GM23248 (cell line): ENCODE measurements at regions of chr11 and their contacts with region 1.

Region 1: DNA sequence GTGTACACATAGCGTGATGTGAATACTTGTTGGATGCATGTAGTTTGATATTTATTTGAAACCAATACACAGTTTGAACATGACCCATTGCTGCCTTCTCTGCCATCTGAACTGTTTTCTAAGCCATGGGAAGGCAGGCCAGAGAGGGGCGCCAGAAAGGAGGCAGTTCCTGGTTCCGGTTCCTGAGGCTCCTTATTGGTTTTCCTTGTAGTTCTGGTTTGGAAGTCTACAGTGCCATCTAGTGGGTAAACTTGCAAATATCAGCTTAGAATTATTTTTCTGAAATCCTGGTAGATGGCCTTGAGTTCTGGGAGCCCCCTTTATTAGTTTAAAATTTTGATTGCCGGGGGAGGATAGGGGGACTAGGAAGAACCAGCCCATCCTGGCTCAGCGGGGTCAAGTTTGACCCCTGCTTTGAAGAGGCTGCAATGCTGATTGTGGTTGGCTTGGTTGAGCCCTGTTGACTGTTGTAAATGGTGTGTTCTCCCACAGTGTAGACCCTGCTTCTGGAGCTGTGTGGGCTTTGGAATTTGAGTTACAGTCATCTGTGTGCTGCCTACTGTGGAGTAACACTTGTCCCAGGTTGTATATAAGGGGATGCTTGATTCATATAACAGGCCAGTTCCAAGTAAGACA is 48.4 kb downstream of the GRAMD1B start:
- DNase-seq: peak; percentile 90
- H3K4me3 ChIP-seq: no peak overlapping the region
- H3K27ac ChIP-seq: no peak overlapping the region
- H3K4me1 ChIP-seq: peaks cover 32% of the 10 kb centered on the region
- H3K27me3 ChIP-seq: no peaks in the 10 kb centered on the region

Region 2: DNA sequence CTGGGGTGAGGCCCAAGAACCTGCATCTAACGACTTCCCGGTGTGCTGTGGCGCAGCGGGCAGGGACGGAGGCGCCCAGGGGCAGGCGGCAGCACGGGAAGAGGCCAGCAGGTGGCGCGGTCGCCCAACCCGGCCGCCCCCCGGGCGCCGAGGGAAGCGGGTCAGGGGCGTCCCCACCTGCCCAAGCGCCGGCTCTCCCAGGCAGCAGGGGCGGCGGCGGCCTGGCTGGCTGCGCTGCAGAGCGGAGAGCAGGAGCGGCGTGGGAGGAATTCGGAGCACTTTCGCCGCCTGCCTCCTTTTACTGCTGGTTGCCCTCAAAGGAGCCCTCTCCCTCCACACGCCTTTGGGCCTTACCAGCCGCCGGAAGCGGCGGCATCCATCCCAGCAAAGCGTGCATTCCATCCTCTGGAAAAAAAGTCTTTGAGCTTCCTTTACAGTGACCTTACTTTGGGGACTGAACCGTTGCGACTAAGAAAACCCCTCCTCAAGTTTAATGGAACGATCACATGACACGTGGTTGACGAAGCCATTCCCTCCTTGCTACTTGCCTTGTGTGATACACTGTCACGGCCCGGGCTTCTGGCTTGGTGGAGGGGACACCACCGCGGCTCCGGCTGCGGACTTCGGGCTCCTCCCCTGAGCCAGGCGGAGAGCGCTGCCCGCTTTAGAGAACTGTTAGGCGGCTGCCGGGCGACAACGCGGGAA is 176.6 kb before region 1 on chr11:
- in situ Hi-C with region 1: loop called (anchors 5 kb)
- DNase-seq: peak; percentile 76
- H3K4me3 ChIP-seq: peak overlapping the region; percentile 65
- H3K27ac ChIP-seq: peak overlapping the region; percentile 33
- H3K4me1 ChIP-seq: peaks cover 14% of the 10 kb centered on the region
- H3K27me3 ChIP-seq: no peaks in the 10 kb centered on the region

Region 3: GRCh38 chr11:123407130-123407995 is 71.1 kb before region 1 on chr11:
- in situ Hi-C with region 1: loop called (anchors 5 kb)
- DNase-seq: peak; percentile 81
- H3K4me3 ChIP-seq: peak overlapping the region; percentile 43
- H3K27ac ChIP-seq: no peak overlapping the region
- H3K4me1 ChIP-seq: no peaks in the 10 kb centered on the region
- H3K27me3 ChIP-seq: no peaks in the 10 kb centered on the region